ENCODE measurements at regions of chr17 and their contacts with region 1.

Region 1: DNA sequence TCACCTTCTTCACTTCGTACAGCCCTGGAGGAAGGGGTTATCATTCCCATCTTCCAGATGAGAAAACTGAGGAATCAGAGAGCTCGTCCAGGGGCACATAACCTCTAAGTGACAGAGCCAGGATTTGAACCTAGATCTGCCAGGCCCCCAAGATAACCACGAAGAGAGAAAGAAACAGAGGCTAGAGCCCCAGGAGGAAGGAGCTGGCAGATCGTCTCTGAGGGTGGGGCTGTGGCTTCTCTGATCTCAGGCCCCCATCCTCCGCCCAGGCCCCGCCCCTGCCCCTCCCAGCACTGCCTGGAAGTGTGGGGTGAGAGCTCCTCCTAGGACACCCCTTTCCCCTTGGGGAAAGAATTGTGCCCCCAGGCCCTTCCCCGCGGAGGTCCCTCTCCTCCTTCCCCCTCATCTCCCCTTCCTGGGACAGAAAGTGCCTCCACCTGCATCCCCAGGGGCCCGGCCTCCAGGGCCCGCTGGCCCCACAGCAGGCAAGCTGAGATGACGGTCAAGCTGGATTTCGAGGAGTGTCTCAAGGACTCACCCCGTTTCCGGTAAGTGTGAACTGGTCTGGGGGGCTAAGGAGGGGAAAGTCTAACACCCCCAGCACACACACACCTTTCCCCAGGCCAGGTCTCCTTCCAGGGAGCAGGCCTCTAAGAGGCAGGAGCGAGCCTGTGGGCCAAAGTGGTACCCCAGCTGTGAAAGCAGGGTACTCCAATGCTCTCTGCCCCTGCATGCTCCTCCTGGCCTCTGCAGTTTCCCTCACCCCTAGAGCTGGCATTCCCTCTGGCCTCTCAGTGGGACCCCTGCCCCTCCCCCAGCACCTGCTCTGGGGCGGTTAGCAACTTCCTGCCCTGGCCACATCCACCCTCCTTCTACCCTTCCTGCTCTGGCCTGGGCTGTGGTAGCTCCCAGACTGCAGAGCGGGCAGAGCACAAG is at the start of gene ACAP1:
- DNase-seq: peak; percentile 96
- ATAC-seq: peak; percentile 95
- H3K4me3 Mint-ChIP-seq: peak within 1 kb of the TSS; percentile 93
- H3K27ac Mint-ChIP-seq: peak within 1 kb of the TSS; percentile 96
- H3K4me1 Mint-ChIP-seq: peaks cover 48% of the 10 kb centered on the region
- H3K27me3 Mint-ChIP-seq: no peaks in the 10 kb centered on the region
- total RNA-seq, gene ACAP1: 594 to 712 TPM

Region 2: GRCh38 chr17:7308625-7309433 is 27.7 kb before region 1 on chr17:
- CTCF ChIA-PET with region 1: interaction called, 14 read pairs
- DNase-seq: peak; percentile 92
- ATAC-seq: peak; percentile 31
- H3K4me3 Mint-ChIP-seq: peak overlapping the region; percentile 91
- H3K27ac Mint-ChIP-seq: peak overlapping the region; percentile 96
- H3K4me1 Mint-ChIP-seq: peaks cover 54% of the 10 kb centered on the region
- H3K27me3 Mint-ChIP-seq: no peaks in the 10 kb centered on the region

Region 3: DNA sequence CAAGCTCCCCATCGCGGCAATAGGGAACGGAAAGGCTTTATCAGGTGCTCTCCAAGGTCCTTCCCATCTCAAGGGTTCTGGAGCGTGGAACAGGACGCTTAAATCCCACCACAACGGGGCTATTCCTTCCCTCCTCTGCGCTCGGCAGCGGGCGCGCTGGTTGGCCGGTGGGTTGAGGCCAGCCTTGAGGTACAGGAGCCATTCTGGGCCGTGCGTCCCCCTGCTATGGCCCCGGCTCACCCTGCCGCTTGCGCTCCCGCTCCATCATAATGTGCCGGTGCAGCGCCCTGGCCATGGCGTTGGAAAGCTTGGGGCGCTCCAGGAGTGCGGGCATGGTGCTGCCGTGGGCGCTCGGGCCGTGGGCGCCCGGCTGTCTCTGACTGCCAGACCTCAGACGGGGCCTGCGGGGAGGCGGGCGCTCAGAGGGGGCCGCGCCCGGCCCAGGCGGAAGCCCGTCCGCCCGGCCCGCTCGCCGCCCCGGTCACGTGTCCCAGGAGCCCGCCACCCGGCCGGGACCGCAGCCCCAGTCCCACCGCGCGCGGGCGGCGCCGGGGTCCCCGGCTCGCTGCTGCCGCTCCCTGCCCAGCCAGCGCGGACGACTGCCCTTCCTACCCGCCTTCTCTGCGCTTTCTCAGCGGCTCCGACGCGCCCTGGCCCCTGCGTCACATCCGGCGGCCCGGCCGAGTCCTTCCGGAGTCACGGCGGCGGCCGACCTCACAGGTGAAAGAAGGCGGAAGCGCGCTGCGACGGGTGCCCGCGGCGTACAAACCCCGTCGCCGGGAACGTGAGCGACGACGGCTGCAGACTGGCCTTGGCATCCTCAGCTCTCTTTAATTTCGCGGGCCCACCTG is 21.6 kb before region 1 on chr17 and contains the start of gene GPS2:
- CTCF ChIA-PET with region 1: interaction called, 14 read pairs
- DNase-seq: peak; percentile 96
- ATAC-seq: peak; percentile 87
- H3K4me3 Mint-ChIP-seq: peak within 1 kb of the TSS; percentile 80
- H3K27ac Mint-ChIP-seq: peak within 1 kb of the TSS; percentile 91
- H3K4me1 Mint-ChIP-seq: peaks cover 53% of the 10 kb centered on the region
- H3K27me3 Mint-ChIP-seq: no peaks in the 10 kb centered on the region
- total RNA-seq, gene GPS2: 83.7 to 85.1 TPM

Region 4: GRCh38 chr17:7323731-7324437 is 12.6 kb before region 1 on chr17:
- CTCF ChIA-PET with region 1: interaction called, 25 read pairs
- DNase-seq: peak; percentile 72
- ATAC-seq: peak; percentile 54
- H3K4me3 Mint-ChIP-seq: no peak overlapping the region
- H3K27ac Mint-ChIP-seq: no peak overlapping the region
- H3K4me1 Mint-ChIP-seq: peaks cover 20% of the 10 kb centered on the region
- H3K27me3 Mint-ChIP-seq: no peaks in the 10 kb centered on the region

Measured in activated CD8-positive, alpha-beta memory T cell treated with anti-CD3 and anti-CD28 coated beads, Interleukin-2, amount 10 ng/mL, durations not matched to agents 7 days and 5 days (primary cell).